ENCODE measurements at regions of chr1 and their contacts with region 1.

Region 1: DNA sequence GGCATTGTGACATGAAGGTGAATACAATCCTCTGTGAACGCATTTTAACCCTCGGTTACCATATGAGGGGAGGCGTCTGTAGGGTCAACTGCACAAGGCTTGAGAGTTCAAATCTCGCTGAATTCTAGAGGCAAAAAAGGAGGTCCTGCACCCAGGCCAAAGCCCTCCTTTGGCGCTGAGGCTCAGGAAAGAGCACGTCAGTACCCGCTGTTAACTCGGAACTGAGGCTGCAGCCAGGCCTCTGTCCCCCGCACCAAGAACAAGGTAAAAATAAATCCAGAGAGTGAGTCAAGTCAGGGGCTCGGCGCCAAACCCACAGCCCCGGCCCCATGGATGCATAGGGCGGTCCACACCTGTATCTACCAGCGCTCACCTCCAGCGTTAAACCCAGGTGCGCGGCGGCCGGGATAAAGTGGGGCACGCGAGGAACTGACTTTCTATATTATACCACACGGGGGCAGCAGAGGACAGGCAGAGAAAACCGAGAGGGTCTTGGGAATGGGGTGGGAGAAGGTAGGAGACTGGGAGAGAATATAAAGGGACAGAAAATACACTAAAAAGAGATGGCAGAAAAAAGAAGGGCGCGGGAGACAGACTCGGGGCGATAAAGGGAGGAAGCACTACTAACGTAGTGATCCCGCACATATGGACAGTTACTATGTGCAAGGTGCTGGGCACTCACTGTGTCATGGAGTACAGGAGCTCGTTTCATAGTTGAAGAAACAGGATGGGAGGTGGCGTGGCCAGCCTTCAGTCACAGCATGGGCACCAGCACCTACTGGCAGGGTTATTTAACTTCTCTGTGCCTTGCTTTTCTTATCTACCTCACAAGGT is 54.8 kb downstream of the DMRTA2 start:
- DNase-seq: peak; percentile 52
- H3K4me3 Mint-ChIP-seq: no peak overlapping the region
- H3K27ac Mint-ChIP-seq: no peak overlapping the region
- H3K4me1 Mint-ChIP-seq: no peaks in the 10 kb centered on the region
- H3K27me3 Mint-ChIP-seq: peaks cover 64% of the 10 kb centered on the region
- CTCF ChIP-seq: peak; percentile 97

Region 2: GRCh38 chr1:50430010-50430405 is 61.6 kb after region 1 on chr1:
- CTCF ChIA-PET with region 1: no interaction called
- POLR2A ChIA-PET with region 1: no interaction called
- intact Hi-C with region 1: no loop called
- DNase-seq: no peak
- H3K4me3 Mint-ChIP-seq: no peak overlapping the region
- H3K27ac Mint-ChIP-seq: no peak overlapping the region
- H3K4me1 Mint-ChIP-seq: no peaks in the 10 kb centered on the region
- H3K27me3 Mint-ChIP-seq: peaks cover 34% of the 10 kb centered on the region
- CTCF ChIP-seq: no peak

Region 3: DNA sequence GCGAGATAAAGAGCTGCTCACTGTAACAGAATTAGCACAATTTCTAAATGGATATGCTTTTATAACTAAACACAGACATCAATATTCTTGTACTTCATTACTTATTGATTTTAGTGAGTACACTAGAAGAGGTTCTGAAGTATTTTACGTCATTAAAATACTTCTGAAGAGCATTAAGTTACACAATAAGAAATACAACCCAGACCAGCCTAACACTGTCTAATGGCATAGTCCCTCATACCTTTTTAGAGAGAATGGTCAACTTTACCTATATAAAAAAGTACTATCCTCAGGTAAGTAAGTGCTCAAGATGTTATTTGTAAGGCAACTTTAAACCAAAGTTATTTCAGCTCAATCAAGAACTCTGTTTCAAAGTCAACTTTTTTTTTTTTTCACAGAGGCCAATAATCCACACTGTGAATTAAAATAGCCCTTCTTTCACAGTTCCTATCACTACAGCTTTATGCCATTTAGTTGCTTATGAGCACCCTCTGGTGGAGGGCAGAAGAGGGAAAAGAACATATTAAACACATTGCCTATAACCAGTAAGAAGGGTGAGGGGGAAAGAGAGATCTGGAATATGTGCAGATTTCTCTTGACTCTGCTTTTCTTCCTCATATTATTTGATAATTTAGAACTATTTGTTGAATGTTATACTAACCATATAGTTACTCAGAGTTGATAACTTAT is 236.9 kb after region 1 on chr1:
- CTCF ChIA-PET with region 1: interaction called, 48 read pairs
- POLR2A ChIA-PET with region 1: interaction called, 5 read pairs
- intact Hi-C with region 1: loop called (anchors 1 kb)
- DNase-seq: peak; percentile 70
- H3K4me3 Mint-ChIP-seq: no peak overlapping the region
- H3K27ac Mint-ChIP-seq: no peak overlapping the region
- H3K4me1 Mint-ChIP-seq: peaks cover 20% of the 10 kb centered on the region
- H3K27me3 Mint-ChIP-seq: no peaks in the 10 kb centered on the region
- CTCF ChIP-seq: peak; percentile 56

Region 4: GRCh38 chr1:50620680-50621329 is 252.4 kb after region 1 on chr1:
- CTCF ChIA-PET with region 1: interaction called, 13 read pairs
- POLR2A ChIA-PET with region 1: no interaction called
- intact Hi-C with region 1: no loop called
- DNase-seq: peak; percentile 78
- H3K4me3 Mint-ChIP-seq: peak overlapping the region; percentile 58
- H3K27ac Mint-ChIP-seq: peak overlapping the region; percentile 70
- H3K4me1 Mint-ChIP-seq: peaks cover 9% of the 10 kb centered on the region
- H3K27me3 Mint-ChIP-seq: no peaks in the 10 kb centered on the region
- CTCF ChIP-seq: peak; percentile 67

Region 5: GRCh38 chr1:50735443-50735842 is 367.0 kb after region 1 on chr1:
- CTCF ChIA-PET with region 1: interaction called, 12 read pairs
- POLR2A ChIA-PET with region 1: no interaction called
- intact Hi-C with region 1: loop called (anchors 1 kb)
- DNase-seq: peak; percentile 45
- H3K4me3 Mint-ChIP-seq: no peak overlapping the region
- H3K27ac Mint-ChIP-seq: no peak overlapping the region
- H3K4me1 Mint-ChIP-seq: peaks cover 6% of the 10 kb centered on the region
- H3K27me3 Mint-ChIP-seq: no peaks in the 10 kb centered on the region
- CTCF ChIP-seq: peak; percentile 41

Measured in MCF 10A (cell line).